PC-9 (cell line): ENCODE measurements at regions of chr6 and their contacts with region 1.

Region 1: GRCh38 chr6:138428944-138429598 is 25.0 kb downstream of the HEBP2 start:
- DNase-seq: peak in 1 of 2 experiments; percentile 55
- H3K4me3 ChIP-seq: no peak overlapping the region
- H3K27ac ChIP-seq: no peak overlapping the region
- H3K4me1 ChIP-seq: no peaks in the 10 kb centered on the region
- H3K27me3 ChIP-seq: no peaks in the 10 kb centered on the region
- CTCF ChIP-seq: peak; percentile 89

Region 2: GRCh38 chr6:137970368-137970767 is 458.7 kb before region 1 on chr6:
- CTCF ChIA-PET with region 1: no interaction called
- POLR2A ChIA-PET with region 1: no interaction called
- intact Hi-C with region 1: no loop called
- DNase-seq: no peak
- H3K4me3 ChIP-seq: no peak overlapping the region
- H3K27ac ChIP-seq: no peak overlapping the region
- H3K4me1 ChIP-seq: peaks cover 19% of the 10 kb centered on the region
- H3K27me3 ChIP-seq: no peaks in the 10 kb centered on the region
- CTCF ChIP-seq: no peak

Region 3: DNA sequence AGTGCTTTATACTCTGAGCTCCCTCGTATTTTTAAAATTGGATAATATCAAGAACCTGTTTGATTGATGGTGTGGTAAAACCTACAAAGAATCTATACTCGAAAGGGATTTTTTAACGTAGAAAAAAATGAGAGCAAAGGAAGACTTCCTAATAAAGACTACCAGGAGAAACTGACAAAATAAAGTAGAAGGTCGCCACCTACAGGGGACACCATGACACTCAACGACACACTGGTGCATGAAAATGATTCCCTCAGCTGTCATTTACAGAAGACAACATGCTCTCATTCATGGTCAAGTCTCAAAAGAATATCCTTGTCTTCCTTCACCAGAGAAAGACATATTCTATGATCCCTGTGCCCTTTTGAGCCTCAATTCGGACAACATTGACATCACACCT is 80.3 kb after region 1 on chr6:
- CTCF ChIA-PET with region 1: no interaction called
- POLR2A ChIA-PET with region 1: no interaction called
- intact Hi-C with region 1: loop called (anchors 2 kb)
- DNase-seq: peak; percentile 8 to 53
- H3K4me3 ChIP-seq: no peak overlapping the region
- H3K27ac ChIP-seq: no peak overlapping the region
- H3K4me1 ChIP-seq: no peaks in the 10 kb centered on the region
- H3K27me3 ChIP-seq: no peaks in the 10 kb centered on the region
- CTCF ChIP-seq: peak; percentile 69

Region 4: GRCh38 chr6:138537106-138537505 is 108.0 kb after region 1 on chr6:
- CTCF ChIA-PET with region 1: interaction called, 10 read pairs
- POLR2A ChIA-PET with region 1: no interaction called
- intact Hi-C with region 1: no loop called
- DNase-seq: no peak
- H3K4me3 ChIP-seq: no peak overlapping the region
- H3K27ac ChIP-seq: no peak overlapping the region
- H3K4me1 ChIP-seq: no peaks in the 10 kb centered on the region; the same call in 1 of the 2 replicates
- H3K27me3 ChIP-seq: no peaks in the 10 kb centered on the region
- CTCF ChIP-seq: no peak